CD4-positive, alpha-beta T cell (primary cell): ENCODE measurements at regions of chr6 and their contacts with region 1.

Region 1: GRCh38 chr6:134253681-134254080 is 64.2 kb downstream of the SGK1 start:
- DNase-seq: no peak
- ATAC-seq: no peak
- H3K4me3 ChIP-seq: no peak overlapping the region
- H3K4me3 Mint-ChIP-seq: no peak overlapping the region
- H3K27ac ChIP-seq: no peak overlapping the region
- H3K27ac Mint-ChIP-seq: no peak overlapping the region
- H3K4me1 ChIP-seq: peaks cover 13% of the 10 kb centered on the region
- H3K4me1 Mint-ChIP-seq: peaks cover 22% of the 10 kb centered on the region
- H3K27me3 ChIP-seq: no peaks in the 10 kb centered on the region
- H3K27me3 Mint-ChIP-seq: no peaks in the 10 kb centered on the region
- CTCF ChIP-seq: no peak

Region 2: GRCh38 chr6:134267917-134268361 is 14.3 kb after region 1 on chr6:
- CTCF ChIA-PET with region 1: no interaction called
- POLR2A ChIA-PET with region 1: no interaction called
- intact Hi-C with region 1: loop called in 1 of 2 experiments (anchors 2 kb)
- DNase-seq: no peak
- ATAC-seq: no peak
- H3K4me3 ChIP-seq: no peak overlapping the region
- H3K4me3 Mint-ChIP-seq: no peak overlapping the region
- H3K27ac ChIP-seq: no peak overlapping the region
- H3K27ac Mint-ChIP-seq: no peak overlapping the region
- H3K4me1 ChIP-seq: peaks cover 15% of the 10 kb centered on the region
- H3K4me1 Mint-ChIP-seq: peaks cover 19% of the 10 kb centered on the region
- H3K27me3 ChIP-seq: no peaks in the 10 kb centered on the region
- H3K27me3 Mint-ChIP-seq: no peaks in the 10 kb centered on the region
- CTCF ChIP-seq: no peak